Naive thymus-derived CD4-positive, alpha-beta T cell (primary cell): ENCODE measurements at regions of chr20 and their contacts with region 1.

Region 1: DNA sequence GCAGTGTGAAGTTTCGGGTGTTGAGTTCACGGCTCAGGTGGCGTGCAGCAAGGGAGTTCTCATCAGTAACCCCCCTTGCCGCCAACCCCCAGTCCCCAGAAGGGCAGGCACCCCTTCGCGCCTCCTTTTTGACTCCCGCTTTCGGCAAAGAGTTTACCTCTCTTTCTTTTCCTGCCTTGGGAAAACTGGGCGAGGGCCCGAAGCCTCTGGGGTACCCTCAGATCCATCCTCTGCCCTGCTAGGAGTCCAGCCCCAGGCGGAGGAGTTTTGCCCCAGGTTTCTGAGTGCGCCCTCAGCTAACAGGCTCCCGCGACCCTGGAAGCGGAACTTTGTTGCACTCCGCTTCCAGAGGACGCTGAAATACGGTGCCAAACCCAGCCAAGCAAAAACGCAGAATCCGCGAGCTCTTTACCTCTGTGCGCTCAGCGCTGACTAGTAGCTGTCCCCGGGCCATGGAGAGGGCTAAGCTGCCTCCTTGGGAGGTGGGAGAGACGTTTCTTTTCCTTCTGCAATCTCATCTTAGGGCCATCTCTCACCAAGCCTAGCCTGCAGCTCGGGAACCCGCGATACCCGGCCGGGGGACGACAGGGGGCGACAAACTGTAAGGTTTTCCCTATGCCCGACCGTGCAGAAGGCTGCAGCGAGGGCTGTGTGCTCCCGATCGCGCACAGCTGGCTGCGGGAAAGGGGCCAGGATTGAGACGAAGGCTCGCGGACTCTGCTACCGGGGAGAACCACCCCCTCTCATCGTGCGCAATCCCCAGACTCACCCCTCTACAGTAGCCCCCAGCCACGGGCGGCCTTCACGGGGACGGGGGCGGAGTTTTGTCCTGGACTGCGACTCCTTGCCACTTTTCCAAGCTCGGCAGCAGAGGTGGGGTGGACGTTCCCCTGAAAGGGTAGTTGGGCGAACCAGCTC is 2.7 kb upstream of the PAX1 start:
- DNase-seq: no peak
- ATAC-seq: no peak
- H3K4me3 ChIP-seq: no peak overlapping the region
- H3K4me3 Mint-ChIP-seq: peak overlapping the region in 2 of 10 donors; percentile 6 to 34
- H3K27ac ChIP-seq: no peak overlapping the region
- H3K27ac Mint-ChIP-seq: peak overlapping the region in 1 of 9 donors; percentile 23
- H3K4me1 ChIP-seq: no peaks in the 10 kb centered on the region
- H3K4me1 Mint-ChIP-seq: peaks cover 0 to 19% (median 5%) of the 10 kb centered on the region in 7 donors
- H3K27me3 ChIP-seq: no peaks in the 10 kb centered on the region
- H3K27me3 Mint-ChIP-seq: peaks cover 66 to 93% (median 76%) of the 10 kb centered on the region in 5 donors

Region 2: DNA sequence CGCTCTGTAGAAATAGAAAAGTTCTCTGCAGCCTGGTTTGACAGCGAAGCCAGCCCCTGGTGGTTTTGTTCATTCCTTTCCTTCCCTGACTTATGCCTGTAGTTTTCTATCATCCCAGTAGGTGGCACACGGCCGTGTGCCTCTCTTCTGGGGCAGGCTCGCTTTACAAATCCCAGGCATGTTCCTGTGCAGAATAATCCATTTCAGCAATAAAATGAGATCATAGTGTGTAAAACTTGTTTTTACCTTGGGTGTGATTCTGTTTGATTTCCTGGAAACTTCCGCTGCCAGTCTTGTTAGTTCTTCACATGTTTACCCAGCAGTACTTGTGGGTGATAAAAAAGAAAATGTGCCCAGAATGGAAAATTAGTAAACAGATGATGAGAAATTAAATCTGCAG is 1342.3 kb before region 1 on chr20:
- CTCF ChIA-PET with region 1: no interaction called
- POLR2A ChIA-PET with region 1: no interaction called
- intact Hi-C with region 1: loop called in 1 of 2 experiments (anchors 10 kb)
- DNase-seq: peak in 2 of 9 donors; percentile 5 to 26
- ATAC-seq: peak; percentile 72
- H3K4me3 ChIP-seq: no peak overlapping the region
- H3K4me3 Mint-ChIP-seq: peak overlapping the region in 7 of 10 donors; percentile 27 to 72 (median 55)
- H3K27ac ChIP-seq: no peak overlapping the region
- H3K27ac Mint-ChIP-seq: peak overlapping the region in 1 of 9 donors; percentile 0
- H3K4me1 ChIP-seq: peaks cover 0 to 10% of the 10 kb centered on the region in 2 donors
- H3K4me1 Mint-ChIP-seq: peaks cover 0 to 31% (median 24%) of the 10 kb centered on the region in 7 donors
- H3K27me3 ChIP-seq: no peaks in the 10 kb centered on the region
- H3K27me3 Mint-ChIP-seq: peaks cover 42 to 56% (median 51%) of the 10 kb centered on the region in 5 donors

Region 3: GRCh38 chr20:21395666-21396598 is 306.9 kb before region 1 on chr20:
- CTCF ChIA-PET with region 1: no interaction called
- POLR2A ChIA-PET with region 1: no interaction called
- intact Hi-C with region 1: loop called in 1 of 2 experiments (anchors 5 kb)
- DNase-seq: peak; percentile 21 to 77 (median 67)
- ATAC-seq: peak; percentile 86
- H3K4me3 ChIP-seq: no peak overlapping the region
- H3K4me3 Mint-ChIP-seq: peak overlapping the region; percentile 39 to 85 (median 76)
- H3K27ac ChIP-seq: no peak overlapping the region
- H3K27ac Mint-ChIP-seq: peak overlapping the region in 6 of 9 donors; percentile 16 to 76 (median 60)
- H3K4me1 ChIP-seq: peaks cover 0 to 16% of the 10 kb centered on the region in 2 donors
- H3K4me1 Mint-ChIP-seq: peaks cover 11 to 37% (median 30%) of the 10 kb centered on the region in 7 donors
- H3K27me3 ChIP-seq: peaks cover 43 to 63% of the 10 kb centered on the region in 2 donors
- H3K27me3 Mint-ChIP-seq: peaks cover 63 to 80% (median 75%) of the 10 kb centered on the region in 5 donors

Region 4: DNA sequence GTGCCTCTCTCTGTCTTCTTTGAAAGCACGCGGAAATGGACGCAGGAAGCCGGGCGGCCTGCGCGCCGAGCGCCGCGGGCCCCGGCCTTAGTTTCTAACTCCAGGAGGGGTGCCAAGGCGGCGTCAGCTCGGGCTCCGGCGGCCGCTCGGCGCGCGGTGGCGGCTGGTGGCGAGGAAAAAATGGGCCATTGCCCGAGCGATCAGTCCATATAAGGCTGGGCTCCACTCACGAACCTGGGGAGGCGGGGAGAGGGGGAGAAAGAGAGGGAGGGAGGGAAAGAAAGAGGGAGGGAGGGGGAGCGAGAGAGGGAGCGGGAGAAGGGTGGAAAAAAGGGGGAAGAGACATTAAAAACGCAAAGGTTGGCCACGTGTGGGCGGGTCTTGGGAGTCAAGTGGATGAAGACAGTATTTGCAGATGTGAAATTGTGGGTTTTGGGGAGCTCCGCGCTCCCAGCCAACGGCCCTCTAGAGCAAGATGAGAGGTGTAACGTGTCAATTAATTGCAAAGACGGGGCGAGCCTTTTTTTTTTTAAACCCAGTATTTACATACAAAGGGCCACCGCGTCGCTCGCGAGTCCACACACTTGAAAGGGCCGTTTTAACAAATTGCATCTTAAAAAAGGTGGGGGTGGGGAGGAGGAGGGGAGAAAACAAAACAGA is 188.8 kb before region 1 on chr20 and contains the start of gene NKX2-2:
- CTCF ChIA-PET with region 1: no interaction called
- POLR2A ChIA-PET with region 1: no interaction called
- intact Hi-C with region 1: loop called in 1 of 2 experiments (anchors 2 kb)
- DNase-seq: no peak
- ATAC-seq: no peak
- H3K4me3 ChIP-seq: peak within 1 kb of the TSS; percentile 24
- H3K4me3 Mint-ChIP-seq: peak within 1 kb of the TSS; percentile 47 to 85 (median 76)
- H3K27ac ChIP-seq: no peak within 1 kb of the TSS
- H3K27ac Mint-ChIP-seq: peak within 1 kb of the TSS in 2 of 9 donors; percentile 48 to 73
- H3K4me1 ChIP-seq: peaks cover 0 to 34% of the 10 kb centered on the region in 2 donors
- H3K4me1 Mint-ChIP-seq: peaks cover 26 to 82% (median 61%) of the 10 kb centered on the region in 7 donors
- H3K27me3 ChIP-seq: peaks cover 0 to 38% of the 10 kb centered on the region in 2 donors
- H3K27me3 Mint-ChIP-seq: peaks cover 52 to 90% (median 74%) of the 10 kb centered on the region in 5 donors
- total RNA-seq, gene NKX2-2: not detected

Region 5: GRCh38 chr20:21571841-21572690 is 130.7 kb before region 1 on chr20:
- CTCF ChIA-PET with region 1: no interaction called
- POLR2A ChIA-PET with region 1: no interaction called
- intact Hi-C with region 1: no loop called
- DNase-seq: peak in 4 of 9 donors; percentile 18 to 34 (median 29)
- ATAC-seq: peak; percentile 46
- H3K4me3 ChIP-seq: no peak overlapping the region
- H3K4me3 Mint-ChIP-seq: no peak overlapping the region
- H3K27ac ChIP-seq: no peak overlapping the region
- H3K27ac Mint-ChIP-seq: no peak overlapping the region
- H3K4me1 ChIP-seq: peaks cover 0 to 11% of the 10 kb centered on the region in 2 donors
- H3K4me1 Mint-ChIP-seq: peaks cover 0 to 12% (median 6%) of the 10 kb centered on the region in 7 donors
- H3K27me3 ChIP-seq: no peaks in the 10 kb centered on the region
- H3K27me3 Mint-ChIP-seq: peaks cover 16 to 37% (median 29%) of the 10 kb centered on the region in 5 donors

Region 6: DNA sequence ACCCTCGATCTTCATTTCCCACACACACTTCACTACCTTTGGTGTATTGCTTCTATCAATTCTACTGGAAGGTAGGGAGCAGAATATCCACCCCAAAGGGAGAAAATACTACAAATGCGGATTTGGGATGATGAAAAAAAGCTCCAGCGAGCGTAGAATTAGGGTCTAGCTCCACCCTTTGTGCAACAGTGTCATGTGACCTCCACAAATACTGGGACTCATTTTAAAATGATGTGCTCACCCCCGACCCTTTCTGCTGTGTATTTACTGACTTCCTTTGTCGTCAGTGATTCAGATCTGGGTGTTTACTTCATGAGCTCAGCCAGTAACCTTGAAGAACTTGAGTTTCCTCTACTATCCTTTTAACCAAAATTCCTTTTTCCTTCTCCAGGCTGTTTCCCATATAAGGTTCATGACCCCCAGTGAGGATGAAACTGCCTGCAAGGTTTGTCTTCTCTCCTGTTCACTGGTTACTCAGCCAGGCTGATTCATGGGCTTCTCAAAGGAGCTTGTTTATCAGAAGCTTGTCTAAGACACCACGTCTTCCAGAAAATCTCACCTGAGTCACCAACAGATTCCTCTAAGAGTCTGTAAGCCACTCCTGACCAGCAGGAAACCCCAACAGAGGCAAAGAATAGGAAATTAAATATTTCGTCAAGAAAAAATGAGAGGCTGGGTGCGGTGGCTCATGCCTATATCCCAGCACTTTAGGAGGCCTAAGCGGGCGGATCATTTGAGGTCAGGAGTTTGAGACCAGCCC is 36.9 kb before region 1 on chr20:
- CTCF ChIA-PET with region 1: no interaction called
- POLR2A ChIA-PET with region 1: no interaction called
- intact Hi-C with region 1: no loop called
- DNase-seq: no peak
- ATAC-seq: no peak
- H3K4me3 ChIP-seq: no peak overlapping the region
- H3K4me3 Mint-ChIP-seq: no peak overlapping the region
- H3K27ac ChIP-seq: no peak overlapping the region
- H3K27ac Mint-ChIP-seq: no peak overlapping the region
- H3K4me1 ChIP-seq: no peaks in the 10 kb centered on the region
- H3K4me1 Mint-ChIP-seq: no peaks in the 10 kb centered on the region
- H3K27me3 ChIP-seq: no peaks in the 10 kb centered on the region
- H3K27me3 Mint-ChIP-seq: peaks cover 0 to 10% (median 0%) of the 10 kb centered on the region in 5 donors

Region 7: DNA sequence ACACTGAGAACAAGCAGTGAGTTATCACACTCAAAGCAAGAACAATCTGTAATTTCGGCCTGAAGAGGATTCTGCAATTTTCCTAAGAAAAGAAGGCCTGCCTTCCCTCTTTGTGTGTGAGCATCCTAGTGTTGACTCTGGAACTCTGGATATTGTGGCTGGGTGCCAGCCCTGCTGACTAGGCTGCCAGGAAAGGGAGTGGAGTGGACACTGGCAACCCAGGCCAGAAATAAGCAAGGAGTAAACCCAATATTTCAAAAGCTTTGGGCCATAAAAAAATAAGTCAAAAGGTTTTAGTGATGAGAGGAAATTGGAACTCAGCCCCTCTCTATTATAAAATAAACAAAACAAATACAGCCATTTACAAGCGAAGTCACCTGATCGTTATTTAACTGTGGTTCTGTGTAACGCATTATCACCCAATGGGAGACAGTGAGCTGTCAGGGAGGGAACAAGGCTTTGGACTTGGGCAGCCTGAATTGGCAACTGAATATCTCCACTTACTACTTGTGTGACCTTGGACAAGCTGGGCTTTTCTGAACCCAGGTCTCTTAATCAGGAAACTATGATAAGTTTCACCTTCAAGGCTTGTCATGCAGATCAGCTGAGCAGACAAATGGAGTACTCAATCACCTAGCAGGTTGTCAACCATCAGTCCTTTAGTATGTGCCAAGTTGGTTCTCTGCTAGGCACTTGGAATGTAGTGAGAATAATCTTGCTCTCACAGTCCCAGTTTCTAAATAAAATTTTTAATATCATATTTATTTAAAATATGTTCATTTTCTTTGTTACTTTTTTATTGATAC is 198.9 kb after region 1 on chr20:
- CTCF ChIA-PET with region 1: no interaction called
- POLR2A ChIA-PET with region 1: no interaction called
- intact Hi-C with region 1: no loop called
- DNase-seq: no peak
- ATAC-seq: no peak
- H3K4me3 ChIP-seq: no peak overlapping the region
- H3K4me3 Mint-ChIP-seq: no peak overlapping the region
- H3K27ac ChIP-seq: no peak overlapping the region
- H3K27ac Mint-ChIP-seq: no peak overlapping the region
- H3K4me1 ChIP-seq: no peaks in the 10 kb centered on the region
- H3K4me1 Mint-ChIP-seq: no peaks in the 10 kb centered on the region
- H3K27me3 ChIP-seq: no peaks in the 10 kb centered on the region
- H3K27me3 Mint-ChIP-seq: no peaks in the 10 kb centered on the region

Region 8: DNA sequence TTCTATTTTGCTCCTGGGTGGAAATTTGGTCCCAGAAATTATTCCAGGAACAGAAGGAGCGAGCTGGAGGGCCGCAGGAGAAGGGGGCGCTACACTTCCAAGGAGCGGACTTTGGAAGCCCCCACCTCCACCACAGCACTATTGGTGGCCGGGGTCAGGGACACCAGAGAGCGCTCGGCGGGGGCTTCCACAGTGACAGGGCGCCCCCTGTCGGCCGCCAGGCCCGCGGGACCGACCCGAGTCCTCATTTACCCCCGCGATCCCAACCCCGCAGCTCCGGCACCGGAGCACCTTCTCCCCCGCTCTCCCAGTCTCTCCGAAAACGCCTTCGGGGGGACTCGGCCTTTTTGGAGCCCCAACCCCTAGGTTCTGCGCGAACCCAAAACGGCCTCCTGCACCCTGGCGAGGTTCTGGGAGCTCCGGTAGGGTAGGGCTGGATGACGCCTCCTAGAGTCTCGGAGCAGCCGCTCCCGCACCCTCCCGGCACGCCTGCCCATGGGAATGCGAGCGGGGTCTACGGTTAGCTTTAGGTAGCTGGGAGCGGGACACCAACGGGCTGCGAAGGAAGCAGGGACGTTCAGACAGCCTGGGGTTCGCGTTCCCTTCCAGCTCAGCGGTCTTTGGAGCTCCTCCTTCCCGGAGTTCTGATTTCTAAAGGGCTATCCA is 884.0 kb after region 1 on chr20:
- CTCF ChIA-PET with region 1: no interaction called
- POLR2A ChIA-PET with region 1: no interaction called
- intact Hi-C with region 1: loop called in 1 of 2 experiments (anchors 5 kb)
- DNase-seq: no peak
- ATAC-seq: no peak
- H3K4me3 ChIP-seq: no peak overlapping the region
- H3K4me3 Mint-ChIP-seq: no peak overlapping the region
- H3K27ac ChIP-seq: no peak overlapping the region
- H3K27ac Mint-ChIP-seq: no peak overlapping the region
- H3K4me1 ChIP-seq: no peaks in the 10 kb centered on the region
- H3K4me1 Mint-ChIP-seq: peaks cover 0 to 4% (median 0%) of the 10 kb centered on the region in 7 donors
- H3K27me3 ChIP-seq: no peaks in the 10 kb centered on the region
- H3K27me3 Mint-ChIP-seq: peaks cover 41 to 70% (median 50%) of the 10 kb centered on the region in 5 donors